B cell (primary cell): ENCODE measurements at regions of chr9 and their contacts with region 1.

Region 1: DNA sequence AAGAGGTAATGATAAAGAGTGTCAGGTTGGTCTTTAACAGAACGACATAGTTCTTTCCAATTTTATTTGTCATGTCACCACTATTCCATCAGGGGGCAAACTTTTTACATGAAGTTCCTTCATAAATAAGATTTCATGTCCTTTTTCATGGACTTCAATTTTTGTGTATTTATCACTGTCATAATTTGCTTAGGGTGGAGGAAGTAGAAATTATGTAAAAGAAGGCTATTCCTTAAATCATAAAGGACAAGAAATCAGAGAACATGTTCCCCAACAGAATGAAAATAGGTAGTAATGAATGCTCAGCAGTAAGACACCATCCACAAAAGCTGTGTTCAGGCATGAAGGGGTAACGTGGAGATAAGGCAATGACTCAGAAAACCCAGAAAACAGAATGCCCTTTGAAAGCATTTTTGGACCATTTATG is 72.7 kb downstream of the ZFAND5 start:
- DNase-seq: peak; percentile 56
- ATAC-seq: peak; percentile 31
- H3K4me3 ChIP-seq: no peak overlapping the region
- H3K4me3 Mint-ChIP-seq: no peak overlapping the region
- H3K27ac ChIP-seq: no peak overlapping the region
- H3K27ac Mint-ChIP-seq: no peak overlapping the region
- H3K4me1 ChIP-seq: peaks cover 7 to 19% of the 10 kb centered on the region in 2 donors
- H3K4me1 Mint-ChIP-seq: peaks cover 16% of the 10 kb centered on the region
- H3K27me3 ChIP-seq: peaks cover 0 to 5% (median 0%) of the 10 kb centered on the region in 4 experiments
- H3K27me3 Mint-ChIP-seq: peaks cover 10% of the 10 kb centered on the region
- CTCF ChIP-seq: peak; percentile 78

Region 2: GRCh38 chr9:72443855-72444254 is 151.6 kb after region 1 on chr9:
- CTCF ChIA-PET with region 1: interaction called, 7 read pairs
- POLR2A ChIA-PET with region 1: no interaction called
- intact Hi-C with region 1: loop called (anchors 2 kb)
- DNase-seq: peak; percentile 67
- ATAC-seq: peak; percentile 81
- H3K4me3 ChIP-seq: no peak overlapping the region
- H3K4me3 Mint-ChIP-seq: peak overlapping the region; percentile 20
- H3K27ac ChIP-seq: peak overlapping the region; percentile 5 to 19
- H3K27ac Mint-ChIP-seq: peak overlapping the region; percentile 77
- H3K4me1 ChIP-seq: peaks cover 26 to 33% of the 10 kb centered on the region in 2 donors
- H3K4me1 Mint-ChIP-seq: peaks cover 31% of the 10 kb centered on the region
- H3K27me3 ChIP-seq: no peaks in the 10 kb centered on the region
- H3K27me3 Mint-ChIP-seq: no peaks in the 10 kb centered on the region
- CTCF ChIP-seq: peak; percentile 31

Region 3: DNA sequence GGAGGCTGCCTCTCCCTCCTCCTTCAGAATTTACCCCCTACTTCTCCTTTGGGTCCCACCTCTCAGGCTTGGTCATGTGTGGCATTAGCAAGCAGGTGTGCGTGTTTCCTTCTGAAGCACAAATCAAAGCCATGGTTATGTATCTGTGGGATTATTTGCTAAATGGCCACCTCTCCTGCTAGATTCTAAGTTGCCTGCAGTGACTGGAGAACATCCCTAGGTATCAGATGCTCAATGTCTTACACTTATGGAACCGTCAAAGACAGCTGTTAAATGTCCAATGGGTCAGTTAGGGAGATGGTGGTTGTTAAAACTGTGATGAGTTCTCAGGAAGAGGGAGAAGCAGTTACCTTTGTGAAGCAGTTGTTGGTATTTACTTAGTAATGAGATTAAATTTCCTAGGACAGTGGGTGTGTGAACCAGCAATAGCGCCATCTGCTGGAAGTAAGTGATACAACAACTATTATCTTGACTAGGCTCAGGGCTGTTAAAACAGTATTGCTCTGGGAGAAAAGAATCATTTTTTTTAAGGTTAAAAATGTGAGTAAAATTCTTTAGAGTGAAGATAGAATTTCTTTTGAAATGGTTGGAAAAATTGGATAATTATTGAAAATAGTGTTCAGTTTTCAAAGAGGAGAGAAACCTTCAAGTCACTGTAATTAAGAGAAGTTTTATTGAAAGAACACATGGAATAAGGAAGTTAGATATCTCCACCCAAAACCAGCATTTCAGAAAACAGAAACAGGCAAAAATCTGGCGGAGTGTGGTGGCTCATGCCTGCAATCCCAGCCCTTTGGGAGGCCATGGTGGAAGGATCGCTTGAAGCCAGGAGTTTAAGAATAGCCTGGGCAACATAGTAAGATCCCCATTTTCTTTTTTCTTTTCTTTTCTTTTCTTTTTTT is 300.5 kb after region 1 on chr9:
- CTCF ChIA-PET with region 1: interaction called, 102 read pairs
- POLR2A ChIA-PET with region 1: no interaction called
- intact Hi-C with region 1: no loop called
- DNase-seq: peak; percentile 73
- ATAC-seq: peak; percentile 67
- H3K4me3 ChIP-seq: no peak overlapping the region
- H3K4me3 Mint-ChIP-seq: no peak overlapping the region
- H3K27ac ChIP-seq: no peak overlapping the region
- H3K27ac Mint-ChIP-seq: no peak overlapping the region
- H3K4me1 ChIP-seq: peaks cover 0 to 3% of the 10 kb centered on the region in 2 donors
- H3K4me1 Mint-ChIP-seq: peaks cover 5% of the 10 kb centered on the region
- H3K27me3 ChIP-seq: peaks cover 0 to 5% (median 0%) of the 10 kb centered on the region in 4 experiments
- H3K27me3 Mint-ChIP-seq: peaks cover 5% of the 10 kb centered on the region
- CTCF ChIP-seq: peak; percentile 92